ENCODE measurements at regions of chr12 and their contacts with region 1.

Region 1: GRCh38 chr12:45215419-45216229 is at the start of gene ANO6:
- DNase-seq: peak; percentile 83 to 93
- ATAC-seq: peak; percentile 91 to 94
- H3K4me3 ChIP-seq: peak within 1 kb of the TSS; percentile 89
- H3K27ac ChIP-seq: peak within 1 kb of the TSS; percentile 95 to 100
- H3K4me1 ChIP-seq: peaks cover 35% of the 10 kb centered on the region
- CTCF ChIP-seq: peak; percentile 54
- EP300 ChIP-seq: no peak
- POLR2A ChIP-seq: peak; percentile 89
- RAD21 ChIP-seq: peak; percentile 54 to 58
- polyA plus RNA-seq, gene ANO6: 80.0 and 85.4 TPM in 2 replicates

Region 2: GRCh38 chr12:45191239-45191638 is 24.4 kb before region 1 on chr12:
- CTCF ChIA-PET with region 1: interaction called, 11 read pairs
- POLR2A ChIA-PET with region 1: interaction called, 3 read pairs
- DNase-seq: peak in 1 of 2 experiments; percentile 24
- ATAC-seq: peak; percentile 33 to 46; a peak in 2 of 6 replicates
- H3K4me3 ChIP-seq: no peak overlapping the region
- H3K27ac ChIP-seq: peak overlapping the region in 1 of 2 experiments; percentile 38; a peak in 2 of 6 replicates
- H3K4me1 ChIP-seq: peaks cover 25% of the 10 kb centered on the region
- CTCF ChIP-seq: no peak
- EP300 ChIP-seq: no peak
- POLR2A ChIP-seq: no peak
- RAD21 ChIP-seq: no peak

Region 3: GRCh38 chr12:45227316-45228067 is 11.9 kb after region 1 on chr12:
- CTCF ChIA-PET with region 1: interaction called, 31 read pairs
- POLR2A ChIA-PET with region 1: interaction called, 40 read pairs
- DNase-seq: no peak
- ATAC-seq: no peak
- H3K4me3 ChIP-seq: no peak overlapping the region
- H3K27ac ChIP-seq: no peak overlapping the region
- H3K4me1 ChIP-seq: peaks cover 19% of the 10 kb centered on the region
- CTCF ChIP-seq: no peak
- EP300 ChIP-seq: no peak
- POLR2A ChIP-seq: no peak
- RAD21 ChIP-seq: no peak

Region 4: GRCh38 chr12:45268672-45269411 is 53.2 kb after region 1 on chr12:
- CTCF ChIA-PET with region 1: interaction called, 16 read pairs
- POLR2A ChIA-PET with region 1: interaction called, 8 read pairs
- DNase-seq: peak; percentile 35 to 64
- ATAC-seq: peak; percentile 63 to 71
- H3K4me3 ChIP-seq: no peak overlapping the region
- H3K27ac ChIP-seq: peak overlapping the region; percentile 55 to 68
- H3K4me1 ChIP-seq: peaks cover 49% of the 10 kb centered on the region
- CTCF ChIP-seq: peak; percentile 73
- EP300 ChIP-seq: no peak
- POLR2A ChIP-seq: no peak
- RAD21 ChIP-seq: peak; percentile 69

Region 5: GRCh38 chr12:45477526-45477925 is 261.9 kb after region 1 on chr12:
- CTCF ChIA-PET with region 1: no interaction called
- POLR2A ChIA-PET with region 1: no interaction called
- DNase-seq: no peak
- ATAC-seq: no peak
- H3K4me3 ChIP-seq: no peak overlapping the region
- H3K27ac ChIP-seq: no peak overlapping the region
- H3K4me1 ChIP-seq: no peaks in the 10 kb centered on the region
- CTCF ChIP-seq: no peak
- EP300 ChIP-seq: no peak
- POLR2A ChIP-seq: no peak
- RAD21 ChIP-seq: no peak

Region 6: DNA sequence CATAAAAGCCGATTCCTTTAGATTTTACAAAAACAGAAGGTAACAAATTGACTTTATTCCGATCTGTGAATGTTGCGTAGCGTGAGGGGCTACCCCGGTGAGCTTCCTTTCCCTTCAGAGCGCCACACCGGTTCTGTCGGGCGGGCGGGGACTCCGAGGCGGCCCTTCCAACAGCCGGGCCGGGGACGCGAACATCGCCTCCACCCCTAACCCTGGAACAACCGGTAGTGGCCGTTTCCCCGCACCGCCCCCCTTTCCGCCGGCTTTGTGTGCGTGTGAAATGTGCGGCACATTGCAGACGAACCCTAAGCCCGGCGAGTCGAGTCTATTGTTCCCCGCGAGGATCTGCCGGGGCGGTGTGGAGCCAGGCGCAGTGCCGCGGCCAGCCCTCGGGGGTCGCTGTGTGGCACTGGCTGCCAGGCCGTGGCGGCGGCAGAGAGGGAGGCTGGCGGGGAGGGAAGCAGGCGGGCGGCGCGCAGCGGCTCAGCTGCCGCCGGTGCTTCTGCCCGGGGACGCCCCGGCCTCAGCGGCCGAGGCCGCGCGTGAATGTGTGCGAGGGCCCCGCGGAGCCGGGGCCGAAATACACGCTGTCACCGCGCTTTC is 513.1 kb after region 1 on chr12:
- CTCF ChIA-PET with region 1: interaction called, 4 read pairs
- POLR2A ChIA-PET with region 1: interaction called, 25 read pairs
- DNase-seq: peak; percentile 66 to 97
- ATAC-seq: peak; percentile 62 to 79
- H3K4me3 ChIP-seq: peak overlapping the region; percentile 62
- H3K27ac ChIP-seq: peak overlapping the region; percentile 98 to 99
- H3K4me1 ChIP-seq: peaks cover 41% of the 10 kb centered on the region; the same call in 2 of the 3 replicates
- CTCF ChIP-seq: peak; percentile 72
- EP300 ChIP-seq: no peak
- POLR2A ChIP-seq: peak; percentile 84
- RAD21 ChIP-seq: peak; percentile 11 to 43; a peak in 2 of 5 replicates